AG04449 (cell line): ENCODE measurements at regions of chrX and their contacts with region 1.

Region 1: DNA sequence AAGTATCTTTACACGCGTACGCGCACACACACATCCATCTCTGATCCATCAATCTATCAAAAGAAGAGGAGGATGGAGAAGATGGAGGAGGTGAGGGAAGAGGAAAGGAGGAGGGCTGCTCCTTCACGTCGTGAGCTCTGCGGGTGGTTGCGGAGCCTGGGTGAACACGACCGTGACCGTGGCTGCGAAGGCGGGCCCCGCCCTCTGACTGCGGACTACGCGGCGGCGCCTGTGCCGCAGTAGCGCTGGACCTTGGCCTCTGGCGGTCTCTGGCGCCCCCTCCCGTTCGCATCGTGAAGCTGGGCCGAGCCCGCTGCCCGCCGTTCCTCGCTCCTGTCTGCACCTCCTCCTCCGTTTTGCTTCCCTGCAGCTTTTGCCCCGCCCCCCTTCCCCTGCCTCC is 37.7 kb upstream of the ARAF start:
- DNase-seq: no peak
- H3K4me3 ChIP-seq: peak overlapping the region; percentile 58
- CTCF ChIP-seq: peak; percentile 91

Region 2: DNA sequence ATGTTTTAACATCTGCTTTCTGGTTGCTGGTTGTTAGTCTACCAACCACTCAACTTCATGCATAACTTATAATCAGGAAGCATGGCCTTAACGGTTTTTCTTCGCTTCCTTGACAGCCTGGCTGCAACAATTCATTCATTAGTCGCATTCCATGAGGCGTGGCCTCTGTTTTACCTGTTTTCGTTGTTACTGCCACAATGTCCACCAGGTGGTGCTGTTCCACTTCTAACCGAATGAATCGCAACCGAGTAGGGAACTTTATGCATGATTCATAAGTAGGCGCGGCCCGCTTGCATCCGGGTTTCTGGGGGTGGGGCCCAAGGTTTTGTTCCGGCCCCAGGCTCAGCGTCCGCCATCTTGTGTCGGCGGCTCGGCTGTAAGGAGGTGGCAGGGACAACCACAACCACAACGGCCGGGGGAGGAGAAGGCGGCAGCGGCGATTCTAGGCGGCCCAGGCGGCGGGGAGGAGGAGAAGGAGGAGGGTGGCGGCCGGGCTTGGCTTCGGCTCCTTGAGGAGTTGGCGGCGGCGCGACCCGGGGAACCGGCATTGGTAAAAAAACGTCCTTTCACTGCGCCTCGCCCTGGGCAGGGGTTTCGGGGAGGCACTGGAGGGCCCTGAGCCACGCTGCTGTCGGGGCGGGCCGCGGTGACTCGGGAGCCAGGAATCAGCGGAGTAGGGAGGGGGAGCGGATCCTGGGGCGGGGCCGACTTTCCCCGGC is 329.7 kb before region 1 on chrX and contains the start of gene UBA1:
- CTCF ChIA-PET with region 1: interaction called, 26 read pairs
- POLR2A ChIA-PET with region 1: interaction called, 3 read pairs
- DNase-seq: peak; percentile 65
- H3K4me3 ChIP-seq: peak within 1 kb of the TSS; percentile 72
- CTCF ChIP-seq: peak; percentile 43

Region 3: GRCh38 chrX:47384502-47384901 is 138.8 kb before region 1 on chrX:
- CTCF ChIA-PET with region 1: interaction called, 12 read pairs
- POLR2A ChIA-PET with region 1: no interaction called
- DNase-seq: no peak
- H3K4me3 ChIP-seq: no peak overlapping the region
- CTCF ChIP-seq: peak; percentile 57

Region 4: DNA sequence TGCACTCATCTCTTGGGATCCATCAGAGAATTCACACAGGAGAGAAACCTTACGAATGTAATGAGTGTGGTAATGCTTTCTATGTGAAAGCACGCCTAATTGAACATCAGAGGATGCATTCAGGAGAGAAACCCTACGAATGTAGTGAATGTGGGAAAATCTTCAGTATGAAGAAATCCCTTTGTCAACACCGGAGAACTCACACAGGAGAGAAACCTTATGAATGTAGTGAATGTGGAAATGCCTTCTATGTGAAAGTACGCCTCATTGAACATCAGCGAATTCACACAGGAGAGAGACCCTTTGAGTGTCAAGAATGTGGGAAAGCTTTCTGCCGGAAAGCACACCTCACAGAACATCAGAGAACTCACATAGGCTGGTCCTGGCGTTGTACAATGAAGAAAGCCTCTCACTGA is 110.1 kb before region 1 on chrX:
- CTCF ChIA-PET with region 1: no interaction called
- POLR2A ChIA-PET with region 1: no interaction called
- DNase-seq: no peak
- H3K4me3 ChIP-seq: no peak overlapping the region
- CTCF ChIP-seq: no peak

Region 5: DNA sequence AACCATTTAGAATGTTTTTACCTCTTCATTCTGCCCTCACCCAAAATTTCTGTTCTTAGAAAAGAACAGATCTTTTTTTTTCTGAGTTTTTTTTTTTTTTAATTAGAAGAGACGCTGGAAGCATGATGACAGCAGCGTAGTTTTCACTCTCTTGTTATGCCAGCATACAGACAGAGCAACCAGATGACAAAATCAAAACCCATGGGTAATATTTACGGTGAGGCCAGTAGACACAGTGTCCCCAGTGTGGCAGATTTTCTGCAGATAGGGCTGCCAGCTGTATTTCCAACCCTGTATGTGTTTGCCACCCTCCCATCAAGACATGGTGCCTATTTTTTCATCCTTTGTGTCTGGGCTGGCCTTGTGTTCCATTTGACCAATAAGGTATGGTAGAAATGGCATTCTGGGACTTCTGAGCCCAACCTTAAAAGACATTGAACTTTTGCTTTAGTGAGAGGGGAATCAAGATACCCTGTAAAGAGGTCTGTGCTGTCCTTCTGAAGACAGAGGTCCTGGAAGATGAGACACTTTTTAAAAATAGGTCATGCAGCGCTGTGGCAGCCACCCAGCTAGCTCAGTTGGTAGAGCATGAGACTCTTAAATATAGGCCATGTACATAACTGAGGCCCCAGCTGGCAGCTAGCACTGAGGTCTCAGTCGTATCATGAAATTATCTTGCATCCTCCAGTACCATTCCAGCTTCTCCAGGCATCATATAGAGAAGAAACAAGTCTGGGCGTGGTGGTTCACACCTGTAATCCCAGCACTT is 33.6 kb before region 1 on chrX:
- CTCF ChIA-PET with region 1: interaction called, 48 read pairs
- POLR2A ChIA-PET with region 1: no interaction called
- DNase-seq: no peak
- H3K4me3 ChIP-seq: no peak overlapping the region
- CTCF ChIP-seq: no peak

Region 6: DNA sequence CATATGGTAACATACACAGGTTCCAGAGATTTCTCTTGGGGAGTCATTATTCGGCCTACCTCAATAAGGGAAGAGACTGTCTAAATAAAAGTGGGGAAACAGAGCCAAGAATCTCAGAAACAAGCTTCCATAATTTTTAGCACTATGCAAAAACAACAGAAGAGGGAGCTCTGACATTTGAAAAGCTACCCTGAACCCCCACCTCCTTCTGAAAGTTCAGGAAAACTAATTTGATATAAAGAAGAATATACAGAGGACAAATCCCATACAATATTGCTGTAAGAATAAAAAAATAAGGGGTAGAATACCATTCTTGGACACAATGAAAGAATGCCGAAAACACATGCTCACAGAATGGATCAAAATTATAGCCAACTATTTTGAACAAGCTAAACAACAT is 26.0 kb before region 1 on chrX:
- CTCF ChIA-PET with region 1: interaction called, 48 read pairs
- POLR2A ChIA-PET with region 1: interaction called, 5 read pairs
- DNase-seq: no peak
- H3K4me3 ChIP-seq: no peak overlapping the region
- CTCF ChIP-seq: peak; percentile 16

Region 7: GRCh38 chrX:47507153-47507867 is 16.0 kb before region 1 on chrX:
- CTCF ChIA-PET with region 1: interaction called, 38 read pairs
- POLR2A ChIA-PET with region 1: no interaction called
- DNase-seq: no peak
- H3K4me3 ChIP-seq: no peak overlapping the region
- CTCF ChIP-seq: no peak

Region 8: GRCh38 chrX:47540754-47541538 is 17.6 kb after region 1 on chrX:
- CTCF ChIA-PET with region 1: interaction called, 10 read pairs
- POLR2A ChIA-PET with region 1: no interaction called
- DNase-seq: peak; percentile 59
- H3K4me3 ChIP-seq: no peak overlapping the region
- CTCF ChIP-seq: peak; percentile 37